ENCODE measurements at regions of chr22 and their contacts with region 1.

Region 1: DNA sequence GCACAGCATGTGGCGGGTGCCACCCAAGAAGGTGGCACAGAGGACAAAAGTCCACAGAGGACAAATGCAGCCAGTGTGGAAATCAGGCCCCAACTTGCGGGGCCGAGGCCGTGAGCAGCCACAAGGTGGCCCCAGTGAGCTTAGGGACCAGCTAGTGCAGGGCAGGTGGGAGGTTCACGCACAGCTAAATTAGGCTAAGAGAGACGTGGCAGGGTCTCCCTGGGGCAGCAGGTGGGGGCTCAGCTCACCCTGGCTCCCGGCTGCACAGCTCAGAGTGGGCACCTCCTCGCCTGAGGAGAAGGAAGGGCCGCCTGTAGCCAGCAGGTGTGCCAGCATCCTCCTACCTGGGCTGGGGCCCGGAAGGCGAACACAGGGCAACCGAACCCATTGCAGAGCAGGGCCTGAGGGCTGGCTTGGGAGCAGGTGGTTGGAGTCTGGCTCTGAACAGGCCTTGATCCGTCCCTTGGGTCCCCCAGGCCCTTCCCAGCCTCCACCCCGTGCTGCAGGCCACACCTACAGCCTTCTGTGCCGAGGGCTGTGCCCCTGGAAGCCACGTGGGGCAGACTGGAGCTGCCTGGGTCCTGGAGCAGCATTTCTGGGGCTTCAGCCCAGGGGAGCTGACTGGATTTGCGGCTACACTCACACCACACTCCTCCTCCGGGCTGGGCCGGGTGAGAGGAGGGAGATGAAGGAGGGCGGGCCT is 26.1 kb upstream of the CELSR1 start:
- DNase-seq: peak in 34 of 35 experiments; percentile 46 to 84 (median 70)
- ATAC-seq: peak; percentile 88 to 96 (median 94)
- H3K4me3 ChIP-seq: peak overlapping the region in 1 of 2 donors; percentile 15
- H3K4me3 Mint-ChIP-seq: peak overlapping the region in 2 of 3 donors; percentile 49 to 51
- H3K27ac ChIP-seq: no peak overlapping the region
- H3K27ac Mint-ChIP-seq: peak overlapping the region in 1 of 2 donors; percentile 31
- H3K4me1 ChIP-seq: peaks cover 2 to 12% of the 10 kb centered on the region in 2 experiments
- H3K4me1 Mint-ChIP-seq: peaks cover 3 to 7% (median 6%) of the 10 kb centered on the region in 3 donors
- H3K27me3 ChIP-seq: peaks cover 0 to 5% of the 10 kb centered on the region in 2 experiments
- H3K27me3 Mint-ChIP-seq: no peaks in the 10 kb centered on the region

Region 2: GRCh38 chr22:46619830-46620501 is 56.4 kb after region 1 on chr22 and contains the start of gene GRAMD4:
- CTCF ChIA-PET with region 1: interaction called in 1 of 2 experiments, 14 read pairs
- POLR2A ChIA-PET with region 1: interaction called in 1 of 2 experiments, 4 read pairs
- DNase-seq: no peak
- ATAC-seq: no peak
- H3K4me3 ChIP-seq: no peak within 1 kb of the TSS
- H3K4me3 Mint-ChIP-seq: no peak within 1 kb of the TSS
- H3K27ac ChIP-seq: no peak within 1 kb of the TSS
- H3K27ac Mint-ChIP-seq: no peak within 1 kb of the TSS
- H3K4me1 ChIP-seq: no peaks in the 10 kb centered on the region
- H3K4me1 Mint-ChIP-seq: peaks cover 0 to 4% (median 2%) of the 10 kb centered on the region in 3 donors
- H3K27me3 ChIP-seq: no peaks in the 10 kb centered on the region
- H3K27me3 Mint-ChIP-seq: no peaks in the 10 kb centered on the region
- total RNA-seq, gene GRAMD4: 8.8 to 24.3 (median 22.9) TPM

Region 3: GRCh38 chr22:46737976-46738646 is 174.6 kb after region 1 on chr22 and contains the start of gene CERK:
- CTCF ChIA-PET with region 1: interaction called in 1 of 2 experiments, 13 read pairs
- POLR2A ChIA-PET with region 1: no interaction called
- DNase-seq: peak in 34 of 35 experiments; percentile 38 to 81 (median 57)
- ATAC-seq: peak; percentile 57 to 76 (median 68)
- H3K4me3 ChIP-seq: peak within 1 kb of the TSS; percentile 62 to 84
- H3K4me3 Mint-ChIP-seq: peak within 1 kb of the TSS; percentile 95 to 100 (median 100)
- H3K27ac ChIP-seq: peak within 1 kb of the TSS; percentile 84
- H3K27ac Mint-ChIP-seq: peak within 1 kb of the TSS; percentile 100
- H3K4me1 ChIP-seq: peaks cover 28 to 62% of the 10 kb centered on the region in 2 experiments
- H3K4me1 Mint-ChIP-seq: peaks cover 43 to 48% (median 45%) of the 10 kb centered on the region in 3 donors
- H3K27me3 ChIP-seq: no peaks in the 10 kb centered on the region
- H3K27me3 Mint-ChIP-seq: no peaks in the 10 kb centered on the region
- total RNA-seq, gene CERK: 77.4 to 155 (median 125) TPM

Region 4: DNA sequence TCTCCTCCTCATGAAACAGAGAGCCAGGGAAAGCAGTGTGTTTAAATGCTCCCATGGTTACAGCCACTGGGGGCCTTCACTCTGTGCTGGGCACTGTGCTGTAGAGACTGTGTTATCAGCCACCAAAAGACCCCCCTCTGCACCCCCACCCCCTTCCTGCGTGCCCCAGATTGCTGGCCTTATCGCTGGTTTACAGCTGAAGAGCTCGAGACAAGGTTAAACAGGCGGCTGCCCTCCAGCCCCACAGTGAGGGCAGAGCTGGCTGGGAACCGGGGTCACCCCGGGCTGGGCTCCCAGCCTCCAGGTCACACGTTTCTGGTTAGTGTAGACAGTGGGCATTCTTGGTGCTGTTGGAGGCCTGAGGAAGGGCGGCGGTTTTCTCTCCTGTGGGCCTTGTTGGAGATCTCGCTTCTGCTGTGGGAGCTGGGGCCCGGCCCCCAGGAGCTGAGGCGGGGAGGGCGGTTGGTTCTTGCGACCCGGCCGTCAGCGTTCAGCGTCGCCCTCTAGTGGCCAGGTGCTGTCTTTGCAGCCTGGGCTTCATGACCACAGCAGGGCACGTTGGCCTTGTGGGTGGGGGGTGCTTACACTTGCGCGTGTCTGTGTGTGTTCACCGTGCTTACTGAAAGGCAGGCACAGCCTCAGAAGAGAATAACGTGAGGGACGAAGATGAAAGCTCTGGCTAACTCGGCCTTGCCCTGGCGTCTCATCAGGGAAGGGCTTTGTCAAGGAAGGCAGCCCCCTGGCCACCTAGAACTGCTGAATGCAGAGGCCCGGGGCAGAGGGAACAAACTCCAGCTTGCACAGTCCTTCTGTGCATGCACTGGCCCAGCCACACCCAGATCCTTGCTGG is 239.7 kb after region 1 on chr22:
- CTCF ChIA-PET with region 1: interaction called, 4 to 11 read pairs
- POLR2A ChIA-PET with region 1: no interaction called
- DNase-seq: peak; percentile 38 to 90 (median 67)
- ATAC-seq: peak; percentile 75 to 83 (median 81)
- H3K4me3 ChIP-seq: no peak overlapping the region
- H3K4me3 Mint-ChIP-seq: peak overlapping the region in 1 of 3 donors; percentile 31
- H3K27ac ChIP-seq: peak overlapping the region; percentile 36
- H3K27ac Mint-ChIP-seq: peak overlapping the region; percentile 41 to 77
- H3K4me1 ChIP-seq: peaks cover 4 to 21% of the 10 kb centered on the region in 2 experiments
- H3K4me1 Mint-ChIP-seq: peaks cover 51 to 59% (median 56%) of the 10 kb centered on the region in 3 donors
- H3K27me3 ChIP-seq: no peaks in the 10 kb centered on the region
- H3K27me3 Mint-ChIP-seq: no peaks in the 10 kb centered on the region